Transverse colon (tissue), 4 donors: ENCODE measurements at regions of chr1 and their contacts with region 1.

Region 1: GRCh38 chr1:239647964-239648632 is 261.7 kb downstream of the CHRM3 start:
- DNase-seq: no peak
- H3K4me3 ChIP-seq: no peak overlapping the region
- H3K27ac ChIP-seq: no peak overlapping the region
- H3K4me1 ChIP-seq: no peaks in the 10 kb centered on the region
- H3K27me3 ChIP-seq: no peaks in the 10 kb centered on the region
- CTCF ChIP-seq: no peak
- EP300 ChIP-seq: no peak
- POLR2A ChIP-seq: no peak

Region 2: GRCh38 chr1:239570878-239571277 is 77.2 kb before region 1 on chr1:
- in situ Hi-C with region 1: no loop called
- intact Hi-C with region 1: loop called (anchors 2 kb)
- DNase-seq: no peak
- H3K4me3 ChIP-seq: no peak overlapping the region
- H3K27ac ChIP-seq: no peak overlapping the region
- H3K4me1 ChIP-seq: no peaks in the 10 kb centered on the region
- H3K27me3 ChIP-seq: no peaks in the 10 kb centered on the region
- CTCF ChIP-seq: no peak
- EP300 ChIP-seq: no peak
- POLR2A ChIP-seq: no peak

Region 3: GRCh38 chr1:239947801-239948200 is 299.7 kb after region 1 on chr1:
- in situ Hi-C with region 1: no loop called
- intact Hi-C with region 1: no loop called
- DNase-seq: no peak
- H3K4me3 ChIP-seq: no peak overlapping the region
- H3K27ac ChIP-seq: no peak overlapping the region
- H3K4me1 ChIP-seq: peaks cover 0 to 5% (median 0%) of the 10 kb centered on the region in 4 donors
- H3K27me3 ChIP-seq: no peaks in the 10 kb centered on the region
- CTCF ChIP-seq: no peak
- EP300 ChIP-seq: no peak
- POLR2A ChIP-seq: no peak